ENCODE measurements at regions of chr10 and their contacts with region 1.

Region 1: DNA sequence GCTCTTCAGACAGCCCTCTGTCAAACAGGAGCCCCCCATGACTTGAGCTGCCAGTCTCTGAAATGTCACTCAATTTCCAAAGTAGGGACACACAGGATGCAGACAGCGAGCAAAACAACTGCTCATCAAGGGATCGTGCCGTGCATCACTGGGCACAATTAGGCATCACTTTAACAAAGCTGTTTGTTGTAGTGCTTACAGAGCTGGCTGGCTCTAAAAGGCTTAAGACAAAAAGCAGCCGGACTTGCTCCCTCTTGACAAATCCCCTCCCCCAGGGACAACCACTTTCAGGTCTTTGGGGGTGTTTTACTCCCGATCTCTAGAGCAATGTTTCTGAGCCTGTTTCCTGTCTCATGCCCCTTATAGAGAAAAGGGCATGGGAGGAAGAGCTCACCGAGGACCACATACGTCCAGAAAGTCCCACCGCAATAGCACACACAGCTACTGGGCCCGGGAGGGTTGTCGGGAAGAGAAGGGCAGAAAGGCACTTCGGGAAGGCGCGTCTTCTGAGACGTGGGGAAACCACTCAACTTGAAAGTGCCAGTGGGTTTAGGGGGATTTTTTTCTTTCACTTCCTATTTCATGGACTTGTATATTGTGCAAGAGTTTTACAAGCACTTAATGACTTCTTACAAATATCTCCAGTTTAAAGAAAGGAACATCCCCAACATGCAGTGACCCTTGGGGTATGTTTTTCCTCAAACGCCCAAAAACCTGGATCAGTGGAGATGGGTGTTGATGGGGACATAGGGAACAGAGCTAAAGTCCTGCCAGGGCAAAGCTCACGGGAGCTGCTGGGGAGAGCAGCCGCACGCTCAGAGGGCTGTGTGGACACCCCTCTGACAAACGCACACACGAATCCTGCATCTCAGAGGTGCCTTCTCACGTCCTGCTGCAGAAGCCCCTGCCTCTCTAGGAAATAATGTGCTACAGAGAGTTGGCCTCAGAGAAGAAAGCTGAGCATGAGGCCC is 27.1 kb downstream of the LRRC20 start:
- DNase-seq: peak; percentile 66
- CTCF ChIP-seq: no peak

Region 2: GRCh38 chr10:70212879-70213278 is 142.5 kb before region 1 on chr10:
- in situ Hi-C with region 1: loop called (anchors 10 kb)
- DNase-seq: no peak
- CTCF ChIP-seq: no peak

Region 3: DNA sequence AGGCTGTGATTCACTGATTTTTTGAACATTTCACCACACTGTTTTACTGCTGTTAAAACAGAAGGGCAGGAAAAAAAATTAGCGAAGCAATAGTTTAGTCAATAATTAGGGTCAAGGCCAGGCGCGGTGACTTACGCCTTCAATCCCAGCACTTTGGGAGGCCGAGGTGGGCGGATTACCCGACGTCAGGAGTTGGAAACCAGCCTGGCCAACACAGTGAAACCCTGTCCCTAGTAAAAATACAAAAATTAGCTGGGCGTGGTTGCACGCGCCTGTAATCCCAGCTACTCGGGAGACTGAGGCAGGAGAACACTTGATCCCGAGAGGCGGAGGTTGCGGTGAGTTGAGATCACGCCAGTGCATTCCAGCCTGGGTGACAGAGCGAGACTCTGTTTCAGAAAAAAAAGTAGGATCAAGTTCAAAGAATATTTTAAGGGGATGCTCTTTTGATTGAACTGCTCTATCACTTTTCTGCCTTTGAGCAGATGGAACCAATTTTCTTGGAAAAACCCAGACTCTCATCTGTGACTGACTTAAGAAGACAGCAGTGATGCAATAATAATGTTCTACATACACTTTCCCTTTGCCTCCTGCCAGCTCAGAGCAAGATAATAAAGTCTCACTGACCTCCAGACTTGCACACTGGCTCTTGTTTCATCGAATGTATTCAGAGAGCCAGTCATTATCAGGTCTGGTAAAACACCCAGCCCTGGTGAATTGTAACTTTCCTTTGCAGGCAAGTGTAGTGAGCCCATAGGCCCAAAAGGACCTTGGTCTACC is 120.5 kb before region 1 on chr10:
- in situ Hi-C with region 1: no loop called
- DNase-seq: no peak
- CTCF ChIP-seq: no peak